OCI-LY7 (cell line): ENCODE measurements at regions of chr2 and their contacts with region 1.

Region 1: DNA sequence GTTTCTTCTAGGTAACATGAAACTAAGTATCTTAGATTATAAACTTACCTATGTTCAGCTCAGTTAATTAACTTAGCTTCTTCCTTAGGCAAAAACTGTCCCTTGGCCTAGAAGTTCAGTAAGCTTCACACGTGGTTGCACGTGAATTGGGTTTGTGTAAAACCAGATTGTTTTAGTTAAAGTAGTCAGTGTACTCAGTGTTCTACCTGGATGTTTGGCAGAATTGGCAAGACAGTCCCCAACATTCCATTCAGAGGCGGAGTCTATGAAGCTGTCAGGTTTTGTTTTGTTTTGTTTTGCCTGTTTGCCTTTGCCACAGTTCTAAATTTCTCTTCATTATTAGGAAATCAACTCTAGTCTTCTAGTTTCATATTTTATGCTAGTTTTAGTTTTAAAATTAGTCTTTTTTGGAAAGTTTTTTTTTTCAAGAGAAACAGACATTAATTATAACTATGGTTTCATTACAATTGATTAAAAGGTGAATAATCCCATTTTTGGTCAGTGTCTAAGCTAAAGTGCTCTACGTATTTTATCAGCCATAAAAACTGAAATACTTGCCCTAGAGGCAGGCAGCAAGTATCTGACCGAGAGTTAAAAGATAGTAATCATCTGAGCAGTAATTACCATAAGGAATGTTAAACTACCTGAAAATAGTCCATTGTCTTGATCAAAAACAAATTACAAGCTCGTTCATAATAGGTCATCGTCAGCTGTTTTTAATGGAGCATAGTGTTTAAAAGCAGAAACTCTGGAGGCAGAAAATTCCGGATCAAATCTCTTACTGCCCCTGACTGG is 105.5 kb upstream of the ZEB2 start:
- DNase-seq: no peak
- H3K4me3 ChIP-seq: no peak overlapping the region
- H3K27ac ChIP-seq: no peak overlapping the region
- H3K4me1 ChIP-seq: peaks cover 5% of the 10 kb centered on the region
- CTCF ChIP-seq: no peak

Region 2: GRCh38 chr2:144516981-144517865 is 108.2 kb before region 1 on chr2:
- CTCF ChIA-PET with region 1: no interaction called
- POLR2A ChIA-PET with region 1: no interaction called
- intact Hi-C with region 1: no loop called
- DNase-seq: peak; percentile 64
- H3K4me3 ChIP-seq: peak overlapping the region; percentile 83
- H3K27ac ChIP-seq: no peak overlapping the region
- H3K4me1 ChIP-seq: peaks cover 36% of the 10 kb centered on the region
- CTCF ChIP-seq: no peak

Region 3: GRCh38 chr2:144642131-144642530 is 16.7 kb after region 1 on chr2:
- CTCF ChIA-PET with region 1: no interaction called
- POLR2A ChIA-PET with region 1: interaction called, 10 read pairs
- intact Hi-C with region 1: no loop called
- DNase-seq: peak; percentile 40
- H3K4me3 ChIP-seq: no peak overlapping the region
- H3K27ac ChIP-seq: no peak overlapping the region
- H3K4me1 ChIP-seq: peaks cover 13% of the 10 kb centered on the region
- CTCF ChIP-seq: no peak